Pancreas (tissue), 10 donors: ENCODE measurements at regions of chr11 and their contacts with region 1.

Region 1: DNA sequence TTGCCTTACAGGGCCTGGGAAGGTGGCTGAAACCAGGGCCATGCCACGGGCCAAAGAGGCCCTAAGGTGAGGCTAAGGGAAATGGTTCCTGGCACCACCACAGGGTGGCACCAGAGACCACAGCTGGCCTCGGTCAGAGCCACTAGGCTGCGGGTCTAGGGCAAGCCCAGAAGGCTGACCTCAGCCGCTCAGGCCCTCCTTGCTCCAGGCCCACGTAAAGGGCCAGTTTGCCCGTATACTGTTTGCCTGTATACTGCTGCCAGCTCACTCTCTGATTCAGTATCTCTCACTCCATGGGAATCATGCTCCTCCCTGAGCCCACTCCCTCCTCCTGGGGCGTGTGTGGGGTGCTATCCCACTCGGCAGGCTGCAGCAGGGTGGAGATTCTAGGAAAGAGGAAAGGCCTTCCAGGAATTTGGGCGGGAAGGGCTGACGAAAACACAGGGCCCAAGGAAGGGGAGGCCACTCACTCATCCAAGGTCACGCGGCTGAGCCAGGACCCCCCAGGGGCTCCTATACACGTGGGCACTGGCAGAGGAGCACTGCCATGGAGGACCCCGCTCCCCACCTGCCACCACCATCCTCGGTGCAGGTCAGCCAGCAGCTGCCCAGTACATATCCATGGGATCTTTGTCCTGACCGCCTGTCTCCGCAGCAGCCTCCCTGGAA is 62.4 kb downstream of the NECTIN1 start:
- DNase-seq: peak; percentile 70 to 93 (median 86)
- ATAC-seq: peak; percentile 80 to 93 (median 86)
- H3K4me3 ChIP-seq: no peak overlapping the region
- H3K27ac ChIP-seq: no peak overlapping the region
- H3K4me1 ChIP-seq: peaks cover 0 to 8% (median 4%) of the 10 kb centered on the region in 3 donors
- H3K27me3 ChIP-seq: no peaks in the 10 kb centered on the region
- CTCF ChIP-seq: peak; percentile 86 to 94 (median 92)

Region 2: DNA sequence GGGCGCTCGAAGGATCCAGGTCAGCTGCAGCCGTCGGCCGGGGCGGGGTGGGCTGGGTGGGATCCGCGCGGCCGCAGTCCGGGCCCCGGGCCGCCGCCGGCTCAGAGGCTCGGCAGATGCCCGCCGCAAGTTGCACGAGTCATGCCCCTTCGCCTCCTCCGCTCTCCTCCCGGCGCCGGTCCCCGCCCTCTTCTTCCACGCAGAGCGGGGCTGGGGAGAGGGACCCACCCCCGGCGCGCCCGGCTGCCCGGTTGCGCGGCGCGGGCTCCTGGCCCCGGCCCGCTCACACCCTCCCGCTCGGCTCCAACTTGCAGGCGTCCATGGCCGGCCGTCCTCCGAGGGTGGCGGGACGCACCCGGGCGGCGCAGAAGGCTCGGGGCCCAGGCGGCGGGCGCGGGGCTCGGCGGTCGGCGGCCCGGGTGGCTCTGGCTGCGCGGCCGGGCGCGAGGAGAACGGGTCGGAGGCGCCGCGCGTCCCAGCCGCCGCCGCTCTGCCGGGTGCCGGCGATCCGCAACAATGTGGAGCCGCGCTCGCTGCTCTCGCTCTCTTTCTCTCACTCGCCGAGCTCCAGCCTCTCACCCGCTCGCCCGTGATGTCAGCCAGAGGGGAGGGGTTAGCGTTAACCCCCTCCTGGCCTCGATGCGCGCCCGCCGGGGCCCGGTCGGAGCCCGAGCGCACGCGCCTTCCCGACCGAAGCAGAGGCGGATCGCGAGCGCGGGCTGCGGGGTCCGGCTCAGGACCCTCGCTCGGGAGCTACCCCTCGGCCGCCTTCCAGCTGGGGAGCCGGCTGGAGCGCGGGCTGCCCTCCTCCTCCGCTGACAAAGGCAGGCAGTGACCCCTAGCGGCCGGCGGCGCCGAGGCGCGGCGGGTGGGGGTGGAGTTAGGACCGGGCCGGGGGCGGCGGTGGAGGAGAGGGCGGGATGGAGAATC is 62.3 kb after region 1 on chr11 and contains the start of gene NECTIN1:
- intact Hi-C with region 1: loop called in 2 of 3 experiments (anchors 5 kb)
- DNase-seq: peak; percentile 86 to 99 (median 92)
- ATAC-seq: peak; percentile 83 to 91 (median 85)
- H3K4me3 ChIP-seq: peak within 1 kb of the TSS; percentile 73 to 86 (median 80)
- H3K27ac ChIP-seq: peak within 1 kb of the TSS; percentile 66 to 85 (median 79)
- H3K4me1 ChIP-seq: peaks cover 0 to 5% (median 0%) of the 10 kb centered on the region in 3 donors
- H3K27me3 ChIP-seq: no peaks in the 10 kb centered on the region
- CTCF ChIP-seq: peak; percentile 88 to 98 (median 98)
- total RNA-seq, gene NECTIN1: 14.8 to 24.7 (median 22.2) TPM

Region 3: DNA sequence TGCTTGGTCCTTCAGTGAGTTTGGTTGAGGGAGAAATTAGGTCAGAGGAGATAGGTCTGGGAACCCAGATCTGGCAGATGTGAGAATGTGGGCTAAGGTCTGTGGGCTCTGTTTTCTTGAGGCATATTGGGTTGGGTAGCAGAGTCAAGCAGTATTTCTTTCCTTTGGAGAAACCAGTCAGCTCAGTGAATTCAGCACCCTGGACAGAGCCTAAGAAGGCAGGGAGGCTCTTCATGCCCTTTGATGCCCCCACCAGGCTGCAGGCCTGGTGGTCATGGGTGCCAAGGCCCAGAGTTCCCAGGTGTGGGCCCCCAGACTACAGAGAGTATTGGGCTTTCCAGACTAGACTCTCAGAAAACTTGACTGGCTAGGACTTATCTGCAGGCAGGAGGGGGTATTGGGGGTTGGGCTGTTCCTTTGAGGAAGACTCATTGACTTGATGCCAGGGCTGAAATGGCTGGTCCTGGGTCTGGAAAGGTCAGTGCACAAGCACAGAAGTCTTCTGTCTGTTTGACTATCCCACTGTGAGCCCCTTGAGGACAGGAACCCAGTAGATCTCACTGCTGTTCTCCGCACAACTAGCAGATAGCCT is 107.7 kb after region 1 on chr11:
- intact Hi-C with region 1: no loop called
- DNase-seq: peak in 1 of 6 donors; percentile 22
- ATAC-seq: peak in 2 of 4 donors; percentile 53 to 58
- H3K4me3 ChIP-seq: no peak overlapping the region
- H3K27ac ChIP-seq: no peak overlapping the region
- H3K4me1 ChIP-seq: no peaks in the 10 kb centered on the region
- H3K27me3 ChIP-seq: no peaks in the 10 kb centered on the region
- CTCF ChIP-seq: no peak

Region 4: DNA sequence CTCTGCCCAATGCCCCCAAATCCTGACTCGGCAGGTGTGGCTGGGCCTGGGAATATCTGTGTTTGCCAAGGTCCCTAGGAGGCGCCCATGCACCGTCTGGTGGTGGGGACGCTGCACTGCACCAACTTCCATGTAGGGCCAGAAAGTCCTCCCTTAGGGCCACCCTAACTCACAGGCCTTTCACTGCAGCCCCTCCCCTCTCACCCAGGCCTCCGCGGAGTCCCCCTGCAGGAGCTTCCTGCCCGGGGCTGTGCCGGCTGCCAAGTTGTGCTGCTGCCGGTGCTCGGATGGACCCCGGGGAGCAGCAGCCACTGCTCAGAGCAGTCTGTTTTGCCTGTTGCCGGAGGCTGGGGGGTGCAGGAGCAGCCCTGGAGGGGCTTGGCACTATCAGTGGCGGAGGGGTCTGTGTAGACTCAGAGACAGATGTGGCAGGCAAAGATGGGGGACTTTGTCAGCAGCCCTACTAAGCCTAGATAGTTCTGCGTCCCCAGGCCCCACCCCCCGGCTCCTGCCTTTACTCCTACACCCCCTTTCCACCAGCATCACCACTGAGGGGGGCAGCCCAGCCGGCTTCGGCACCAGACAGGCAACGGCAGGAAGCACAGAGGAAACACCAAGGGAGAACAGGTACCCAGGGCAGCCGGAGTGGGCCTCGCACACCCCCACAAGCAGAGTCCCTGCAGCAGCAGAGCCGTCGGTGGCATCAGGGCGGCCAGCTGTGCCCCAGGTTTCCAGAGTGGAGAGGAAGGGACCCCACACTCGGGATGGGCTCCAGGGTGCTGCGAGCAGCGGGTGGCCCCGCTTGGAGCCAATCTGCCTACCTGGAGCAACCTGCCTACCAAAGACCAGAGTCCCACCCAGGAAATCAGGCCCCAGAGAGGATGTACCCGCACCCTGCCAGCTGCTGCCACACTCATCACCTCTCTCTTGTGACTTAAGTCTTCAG is 347.0 kb after region 1 on chr11:
- intact Hi-C with region 1: loop called in 2 of 3 experiments (anchors 10 kb)
- DNase-seq: peak; percentile 30 to 78 (median 64)
- ATAC-seq: peak; percentile 82 to 97 (median 93)
- H3K4me3 ChIP-seq: no peak overlapping the region
- H3K27ac ChIP-seq: no peak overlapping the region
- H3K4me1 ChIP-seq: no peaks in the 10 kb centered on the region
- H3K27me3 ChIP-seq: no peaks in the 10 kb centered on the region
- CTCF ChIP-seq: peak; percentile 38 to 68 (median 52)